ENCODE measurements at regions of chr2 and their contacts with region 1.

Region 1: GRCh38 chr2:55771612-55772011 is 78.0 kb upstream of the PNPT1 start:
- DNase-seq: peak; percentile 66
- H3K4me3 ChIP-seq: no peak overlapping the region
- H3K27ac ChIP-seq: peak overlapping the region; percentile 52
- H3K4me1 ChIP-seq: peaks cover 15% of the 10 kb centered on the region
- H3K27me3 ChIP-seq: no peaks in the 10 kb centered on the region
- CTCF ChIP-seq: peak; percentile 32 to 35
- POLR2A ChIP-seq: no peak

Region 2: DNA sequence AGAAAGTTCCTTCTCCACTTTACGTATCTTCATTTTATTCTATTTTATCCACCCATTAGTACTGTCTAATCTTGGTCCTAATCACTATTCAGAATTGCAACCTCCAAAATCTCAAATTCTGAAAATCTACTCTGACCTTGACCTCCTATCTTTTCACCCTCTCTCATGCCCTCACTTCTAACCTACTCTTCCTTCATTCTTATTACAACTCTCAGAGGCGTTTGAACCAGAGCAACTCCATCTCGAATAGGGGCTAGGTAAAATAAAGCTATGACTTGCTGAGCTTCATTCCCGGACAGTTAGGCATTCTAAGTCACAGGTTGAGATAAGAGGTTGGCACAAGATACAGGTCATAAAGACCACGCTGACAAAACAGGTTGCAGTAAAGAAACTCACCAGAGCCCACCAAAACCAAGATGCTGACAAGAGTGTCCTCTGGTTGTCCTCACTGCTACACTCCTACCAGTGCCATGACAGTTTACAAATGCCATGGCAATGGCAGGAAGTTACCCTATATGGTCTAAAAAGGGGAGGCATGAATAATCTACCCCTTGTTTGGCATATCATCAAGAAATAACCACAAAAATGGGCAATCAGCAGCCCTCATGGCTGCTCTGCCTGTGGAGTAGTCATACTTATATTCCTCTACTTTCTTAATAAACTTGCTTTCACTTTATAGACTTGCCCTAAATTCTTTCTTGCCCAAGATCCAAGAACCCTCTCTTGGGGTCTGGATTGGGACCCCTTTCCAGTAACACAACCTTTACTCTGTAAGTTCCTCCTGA is 363.3 kb before region 1 on chr2:
- CTCF ChIA-PET with region 1: no interaction called
- POLR2A ChIA-PET with region 1: no interaction called
- dilution Hi-C with region 1: no loop called
- intact Hi-C with region 1: no loop called
- DNase-seq: no peak
- H3K4me3 ChIP-seq: no peak overlapping the region
- H3K27ac ChIP-seq: no peak overlapping the region
- H3K4me1 ChIP-seq: no peaks in the 10 kb centered on the region
- H3K27me3 ChIP-seq: no peaks in the 10 kb centered on the region
- CTCF ChIP-seq: no peak
- POLR2A ChIP-seq: no peak

Region 3: DNA sequence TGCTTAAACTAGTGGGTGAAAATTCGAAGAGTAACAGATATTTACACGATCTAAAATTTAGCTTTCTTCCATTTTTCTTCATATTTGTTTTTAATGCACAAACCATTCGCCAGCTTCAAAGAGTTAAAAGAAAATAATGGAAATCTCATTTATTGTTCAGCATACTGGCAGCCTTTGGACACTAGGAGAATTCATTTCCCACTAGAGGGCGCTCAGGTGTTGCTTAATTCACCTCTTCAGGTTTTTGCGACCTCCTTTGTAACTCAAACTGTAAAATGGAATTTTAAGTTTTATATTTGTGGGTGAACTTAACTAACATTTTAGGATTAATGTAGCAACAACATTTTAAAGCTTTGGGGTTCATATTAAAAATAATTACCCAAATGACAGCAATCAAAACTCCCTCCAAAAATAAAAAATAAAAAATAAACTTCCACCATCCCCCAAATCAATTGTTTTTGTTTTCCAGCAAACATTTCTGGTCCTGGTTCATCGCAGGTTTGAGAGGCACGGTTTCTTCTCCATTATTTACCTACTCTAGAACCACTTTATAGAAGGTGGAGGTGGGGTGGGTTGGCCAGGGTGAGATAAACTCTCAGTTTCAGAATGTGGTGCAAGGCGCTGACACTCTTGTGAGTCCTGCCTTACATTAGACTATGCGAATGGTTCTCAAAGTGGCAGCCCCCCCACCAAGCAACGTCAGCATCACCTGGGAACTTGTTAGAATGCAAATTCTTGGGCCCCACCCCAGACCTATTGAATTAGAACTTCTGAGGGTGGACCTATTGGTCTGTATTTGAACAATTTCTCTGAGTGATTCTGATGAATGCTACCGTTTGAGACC is 53.2 kb before region 1 on chr2:
- CTCF ChIA-PET with region 1: interaction called, 8 read pairs
- POLR2A ChIA-PET with region 1: no interaction called
- dilution Hi-C with region 1: no loop called
- intact Hi-C with region 1: loop called (anchors 1 kb)
- DNase-seq: peak; percentile 77
- H3K4me3 ChIP-seq: no peak overlapping the region
- H3K27ac ChIP-seq: no peak overlapping the region
- H3K4me1 ChIP-seq: peaks cover 7% of the 10 kb centered on the region
- H3K27me3 ChIP-seq: no peaks in the 10 kb centered on the region
- CTCF ChIP-seq: peak; percentile 55 to 65
- POLR2A ChIP-seq: no peak

Region 4: GRCh38 chr2:55856936-55857335 is 85.3 kb after region 1 on chr2:
- CTCF ChIA-PET with region 1: interaction called, 55 read pairs
- POLR2A ChIA-PET with region 1: interaction called, 4 read pairs
- dilution Hi-C with region 1: no loop called
- intact Hi-C with region 1: no loop called
- DNase-seq: peak; percentile 69
- H3K4me3 ChIP-seq: no peak overlapping the region
- H3K27ac ChIP-seq: no peak overlapping the region
- H3K4me1 ChIP-seq: peaks cover 11% of the 10 kb centered on the region
- H3K27me3 ChIP-seq: no peaks in the 10 kb centered on the region
- CTCF ChIP-seq: no peak
- POLR2A ChIP-seq: no peak

Region 5: GRCh38 chr2:55875434-55876135 is 104.0 kb after region 1 on chr2:
- CTCF ChIA-PET with region 1: interaction called, 26 read pairs
- POLR2A ChIA-PET with region 1: no interaction called
- dilution Hi-C with region 1: no loop called
- intact Hi-C with region 1: no loop called
- DNase-seq: peak; percentile 21
- H3K4me3 ChIP-seq: no peak overlapping the region
- H3K27ac ChIP-seq: no peak overlapping the region
- H3K4me1 ChIP-seq: peaks cover 77% of the 10 kb centered on the region
- H3K27me3 ChIP-seq: no peaks in the 10 kb centered on the region
- CTCF ChIP-seq: no peak
- POLR2A ChIP-seq: peak; percentile 32

Region 6: DNA sequence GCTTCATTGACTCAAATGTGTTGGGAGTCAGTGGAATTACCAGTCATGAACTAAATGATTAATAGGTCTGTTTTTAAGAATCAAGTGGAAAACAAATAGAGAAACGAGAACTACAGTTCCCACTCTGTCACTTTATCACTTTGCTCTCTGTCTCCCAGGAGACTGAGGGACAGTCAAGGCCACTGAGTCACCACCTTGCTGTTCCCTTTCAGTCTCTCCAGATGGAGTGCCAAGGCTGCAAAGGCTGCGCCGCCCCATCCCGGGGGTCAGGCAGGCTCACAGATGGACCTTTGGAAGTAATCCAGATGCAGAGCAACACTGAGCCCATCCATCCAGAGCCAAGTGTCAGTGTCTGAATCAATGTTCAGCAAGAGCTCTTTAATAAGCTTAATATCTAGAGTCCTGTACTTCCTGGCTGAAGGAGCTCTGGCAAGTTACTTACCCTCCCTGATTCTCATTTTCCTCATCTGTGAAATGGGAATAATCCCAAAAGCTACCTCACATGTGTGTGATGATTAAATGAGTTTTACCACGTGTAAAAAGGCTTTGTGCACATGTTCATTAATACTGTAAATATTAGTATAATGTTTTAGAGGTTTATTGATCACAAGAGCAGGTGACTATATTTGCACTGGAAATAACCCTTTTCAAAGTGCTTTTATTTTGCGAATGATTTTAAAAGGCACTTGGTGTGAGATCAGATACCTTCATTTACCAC is 194.9 kb after region 1 on chr2:
- CTCF ChIA-PET with region 1: interaction called, 34 read pairs
- POLR2A ChIA-PET with region 1: no interaction called
- dilution Hi-C with region 1: no loop called
- intact Hi-C with region 1: loop called (anchors 1 kb)
- DNase-seq: peak; percentile 97
- H3K4me3 ChIP-seq: no peak overlapping the region
- H3K27ac ChIP-seq: peak overlapping the region; percentile 97
- H3K4me1 ChIP-seq: peaks cover 50% of the 10 kb centered on the region
- H3K27me3 ChIP-seq: no peaks in the 10 kb centered on the region
- CTCF ChIP-seq: peak; percentile 7
- POLR2A ChIP-seq: peak; percentile 48

Region 7: DNA sequence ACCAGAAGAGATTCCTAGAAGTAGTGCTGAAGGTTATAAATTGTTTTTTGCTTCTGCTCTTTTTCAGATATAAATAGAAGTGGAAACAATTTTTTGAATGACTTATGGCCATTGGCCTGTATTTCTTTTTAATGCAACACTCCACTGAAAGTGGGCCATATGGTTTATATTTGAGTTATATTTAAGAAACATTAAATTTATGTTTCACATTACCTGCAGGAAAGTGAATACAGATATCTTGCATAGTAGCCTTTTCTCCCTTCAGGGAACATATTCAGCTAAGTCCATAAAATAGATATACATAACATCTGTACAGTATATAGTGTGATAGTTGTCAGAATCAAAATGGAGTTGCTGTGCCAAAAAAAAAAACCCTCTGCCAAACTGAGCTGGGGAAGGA is 205.1 kb after region 1 on chr2:
- CTCF ChIA-PET with region 1: no interaction called
- POLR2A ChIA-PET with region 1: no interaction called
- dilution Hi-C with region 1: no loop called
- intact Hi-C with region 1: no loop called
- DNase-seq: no peak
- H3K4me3 ChIP-seq: no peak overlapping the region
- H3K27ac ChIP-seq: no peak overlapping the region
- H3K4me1 ChIP-seq: peaks cover 3% of the 10 kb centered on the region
- H3K27me3 ChIP-seq: no peaks in the 10 kb centered on the region
- CTCF ChIP-seq: no peak
- POLR2A ChIP-seq: no peak